Naive thymus-derived CD4-positive, alpha-beta T cell (primary cell): ENCODE measurements at regions of chr2 and their contacts with region 1.

Region 1: GRCh38 chr2:190319555-190320498 is at the start of gene HIBCH:
- DNase-seq: peak; percentile 56 to 88 (median 68)
- ATAC-seq: peak; percentile 94
- H3K4me3 ChIP-seq: peak within 1 kb of the TSS; percentile 83
- H3K4me3 Mint-ChIP-seq: peak within 1 kb of the TSS; percentile 85 to 100 (median 97)
- H3K27ac ChIP-seq: peak within 1 kb of the TSS; percentile 82
- H3K27ac Mint-ChIP-seq: peak within 1 kb of the TSS; percentile 91 to 99 (median 95)
- H3K4me1 ChIP-seq: peaks cover 8 to 13% of the 10 kb centered on the region in 2 donors
- H3K4me1 Mint-ChIP-seq: peaks cover 27 to 54% (median 48%) of the 10 kb centered on the region in 7 donors
- H3K27me3 ChIP-seq: no peaks in the 10 kb centered on the region
- H3K27me3 Mint-ChIP-seq: no peaks in the 10 kb centered on the region
- total RNA-seq, gene HIBCH: 11.3 to 25.0 (median 21.6) TPM

Region 2: DNA sequence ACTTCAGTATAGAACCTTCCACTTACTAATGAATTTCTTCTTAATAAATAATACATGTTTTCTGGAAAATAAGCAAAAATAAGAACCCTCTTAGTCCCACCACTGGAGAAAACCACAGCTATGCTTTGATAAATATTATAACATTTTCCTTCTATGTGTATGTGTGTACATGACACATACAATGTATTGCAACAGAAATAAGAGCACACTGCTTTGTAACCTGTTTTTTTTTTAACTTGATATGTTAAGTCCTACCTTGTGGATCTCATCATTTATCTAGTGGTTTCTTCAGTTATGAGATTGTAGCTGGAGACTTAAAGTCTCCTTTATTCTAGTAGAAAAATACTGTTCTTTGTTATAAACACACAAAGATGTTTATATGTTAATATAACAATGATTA is 40.7 kb after region 1 on chr2:
- CTCF ChIA-PET with region 1: interaction called, 4 read pairs
- POLR2A ChIA-PET with region 1: no interaction called
- intact Hi-C with region 1: loop called (anchors 1 kb)
- DNase-seq: no peak
- ATAC-seq: no peak
- H3K4me3 ChIP-seq: peak overlapping the region; percentile 61
- H3K4me3 Mint-ChIP-seq: peak overlapping the region; percentile 56 to 99 (median 92)
- H3K27ac ChIP-seq: peak overlapping the region; percentile 71
- H3K27ac Mint-ChIP-seq: peak overlapping the region; percentile 42 to 97 (median 94)
- H3K4me1 ChIP-seq: peaks cover 0 to 3% of the 10 kb centered on the region in 2 donors
- H3K4me1 Mint-ChIP-seq: peaks cover 10 to 39% (median 26%) of the 10 kb centered on the region in 7 donors
- H3K27me3 ChIP-seq: no peaks in the 10 kb centered on the region
- H3K27me3 Mint-ChIP-seq: no peaks in the 10 kb centered on the region